OCI-LY7 (cell line): ENCODE measurements at regions of chr9 and their contacts with region 1.

Region 1: GRCh38 chr9:133144137-133144903 is 19.4 kb downstream of the GBGT1 start:
- DNase-seq: peak; percentile 74
- H3K4me3 ChIP-seq: peak overlapping the region; percentile 46
- H3K27ac ChIP-seq: no peak overlapping the region
- H3K4me1 ChIP-seq: peaks cover 31% of the 10 kb centered on the region
- CTCF ChIP-seq: peak; percentile 98

Region 2: GRCh38 chr9:133023117-133023890 is 121.0 kb before region 1 on chr9:
- CTCF ChIA-PET with region 1: no interaction called
- POLR2A ChIA-PET with region 1: no interaction called
- intact Hi-C with region 1: loop called (anchors 2 kb)
- DNase-seq: peak; percentile 66
- H3K4me3 ChIP-seq: no peak overlapping the region
- H3K27ac ChIP-seq: no peak overlapping the region
- H3K4me1 ChIP-seq: peaks cover 30% of the 10 kb centered on the region
- CTCF ChIP-seq: no peak

Region 3: DNA sequence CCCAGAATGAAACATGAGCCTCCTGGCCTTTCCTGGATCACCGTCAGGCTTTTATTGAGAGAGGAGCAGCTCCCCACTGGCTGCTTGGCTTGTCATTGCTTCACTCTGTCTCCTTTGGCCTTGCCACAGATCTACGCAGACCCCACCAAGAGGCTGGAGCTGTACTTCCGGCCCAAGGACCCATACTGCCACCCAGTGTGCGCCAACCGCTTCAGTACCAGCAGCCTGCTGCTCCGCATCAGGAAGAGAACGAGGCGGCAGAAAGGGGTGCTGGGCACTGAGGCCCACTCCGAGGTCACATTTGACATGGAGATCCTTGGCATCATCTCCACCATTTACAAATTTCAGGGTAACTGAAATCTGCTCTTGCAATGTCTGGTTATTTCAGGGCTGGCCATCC is 102.4 kb before region 1 on chr9:
- CTCF ChIA-PET with region 1: no interaction called
- POLR2A ChIA-PET with region 1: no interaction called
- intact Hi-C with region 1: loop called (anchors 2 kb)
- DNase-seq: no peak
- H3K4me3 ChIP-seq: no peak overlapping the region
- H3K27ac ChIP-seq: no peak overlapping the region
- H3K4me1 ChIP-seq: no peaks in the 10 kb centered on the region
- CTCF ChIP-seq: no peak

Region 4: DNA sequence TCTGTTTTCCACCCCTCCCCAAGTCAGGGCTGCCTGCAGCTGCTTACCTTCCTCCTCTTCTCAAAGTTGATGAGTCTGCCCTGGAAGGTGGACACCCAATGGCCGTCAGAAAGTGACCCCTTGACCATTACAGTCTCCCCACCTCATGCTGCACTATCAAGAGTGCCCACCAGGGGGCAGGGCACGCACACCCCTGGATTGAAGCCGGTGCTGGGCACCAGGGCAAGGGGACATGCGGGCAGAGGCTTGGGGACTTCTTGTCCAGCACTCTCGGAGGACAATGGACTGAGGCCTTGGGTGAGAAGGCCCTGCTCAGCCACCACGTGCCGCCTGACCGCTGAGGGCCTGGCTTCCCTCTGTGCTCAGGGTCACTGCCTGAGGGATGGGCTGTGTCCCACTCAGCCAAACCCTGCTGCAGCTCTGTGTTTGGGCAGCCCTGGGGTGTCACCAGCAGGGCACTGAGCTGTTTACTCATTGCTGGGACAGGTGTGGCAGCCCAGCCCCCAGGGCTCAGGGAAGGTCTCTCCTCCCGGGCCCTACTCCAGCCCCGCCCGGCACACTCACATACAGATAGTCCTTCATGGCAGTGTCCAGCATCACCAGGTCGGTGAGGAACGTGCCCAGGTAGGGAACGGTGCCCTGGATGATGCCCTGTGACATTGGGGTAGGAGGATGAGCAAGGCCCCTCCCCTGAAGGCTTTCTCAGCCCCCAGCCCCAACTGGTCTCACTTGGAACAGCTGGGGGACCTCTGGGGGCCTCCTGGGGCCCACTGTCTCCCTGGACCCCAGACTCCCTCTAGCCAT is 40.9 kb before region 1 on chr9:
- CTCF ChIA-PET with region 1: interaction called, 4 read pairs
- POLR2A ChIA-PET with region 1: no interaction called
- intact Hi-C with region 1: loop called (anchors 1 kb)
- DNase-seq: peak; percentile 50
- H3K4me3 ChIP-seq: no peak overlapping the region
- H3K27ac ChIP-seq: no peak overlapping the region
- H3K4me1 ChIP-seq: no peaks in the 10 kb centered on the region
- CTCF ChIP-seq: peak; percentile 93

Region 5: GRCh38 chr9:133121198-133121939 is 23.0 kb before region 1 on chr9 and contains the start of gene RALGDS:
- CTCF ChIA-PET with region 1: no interaction called
- POLR2A ChIA-PET with region 1: no interaction called
- intact Hi-C with region 1: loop called (anchors 1 kb)
- DNase-seq: peak; percentile 90
- H3K4me3 ChIP-seq: peak within 1 kb of the TSS; percentile 64
- H3K27ac ChIP-seq: peak within 1 kb of the TSS; percentile 29
- H3K4me1 ChIP-seq: peaks cover 13% of the 10 kb centered on the region
- CTCF ChIP-seq: no peak
- total RNA-seq, gene RALGDS: 22.0 and 28.2 TPM in 2 replicates